ENCODE measurements at regions of chr2 and their contacts with region 1.

Region 1: DNA sequence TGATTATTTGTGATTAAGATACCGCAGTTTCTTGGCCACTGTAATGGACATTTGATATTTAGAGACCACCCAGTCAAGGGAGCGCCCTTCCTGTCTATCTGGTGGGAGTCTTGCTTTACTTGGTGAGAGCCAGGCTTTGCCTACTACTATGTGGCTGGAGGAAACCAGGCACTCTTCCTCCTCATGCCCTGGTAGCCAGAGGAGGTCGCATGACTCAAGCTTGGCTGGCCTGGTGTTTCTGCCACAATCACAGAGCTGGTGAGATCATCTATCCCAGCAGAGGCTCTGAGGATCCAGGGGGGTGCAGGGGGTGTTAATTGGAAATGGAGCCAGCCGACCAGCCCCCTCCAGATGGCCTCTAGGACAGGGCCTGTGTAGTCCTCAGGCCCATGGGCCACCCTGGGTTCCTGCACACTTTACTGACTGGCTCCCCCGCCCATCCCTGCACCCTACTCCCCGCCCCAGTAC is 46.8 kb upstream of the BIN1 start:
- DNase-seq: peak in 3 of 5 donors; percentile 27 to 57 (median 47)
- H3K4me3 ChIP-seq: no peak overlapping the region
- H3K27ac ChIP-seq: peak overlapping the region; percentile 43 to 61
- H3K4me1 ChIP-seq: peaks cover 7% of the 10 kb centered on the region
- H3K27me3 ChIP-seq: no peaks in the 10 kb centered on the region
- CTCF ChIP-seq: no peak
- EP300 ChIP-seq: no peak
- POLR2A ChIP-seq: no peak

Region 2: GRCh38 chr2:127086990-127087790 is 66.5 kb before region 1 on chr2:
- intact Hi-C with region 1: loop called in 1 of 4 experiments (anchors 10 kb)
- DNase-seq: peak; percentile 92 to 95 (median 94)
- H3K4me3 ChIP-seq: peak overlapping the region; percentile 21
- H3K27ac ChIP-seq: peak overlapping the region; percentile 77 to 90
- H3K4me1 ChIP-seq: peaks cover 35% of the 10 kb centered on the region
- H3K27me3 ChIP-seq: no peaks in the 10 kb centered on the region
- CTCF ChIP-seq: no peak
- EP300 ChIP-seq: no peak
- POLR2A ChIP-seq: peak; percentile 24

Measured in ovary (tissue), 10 donors.